ENCODE measurements at regions of chr6 and their contacts with region 1.

Region 1: DNA sequence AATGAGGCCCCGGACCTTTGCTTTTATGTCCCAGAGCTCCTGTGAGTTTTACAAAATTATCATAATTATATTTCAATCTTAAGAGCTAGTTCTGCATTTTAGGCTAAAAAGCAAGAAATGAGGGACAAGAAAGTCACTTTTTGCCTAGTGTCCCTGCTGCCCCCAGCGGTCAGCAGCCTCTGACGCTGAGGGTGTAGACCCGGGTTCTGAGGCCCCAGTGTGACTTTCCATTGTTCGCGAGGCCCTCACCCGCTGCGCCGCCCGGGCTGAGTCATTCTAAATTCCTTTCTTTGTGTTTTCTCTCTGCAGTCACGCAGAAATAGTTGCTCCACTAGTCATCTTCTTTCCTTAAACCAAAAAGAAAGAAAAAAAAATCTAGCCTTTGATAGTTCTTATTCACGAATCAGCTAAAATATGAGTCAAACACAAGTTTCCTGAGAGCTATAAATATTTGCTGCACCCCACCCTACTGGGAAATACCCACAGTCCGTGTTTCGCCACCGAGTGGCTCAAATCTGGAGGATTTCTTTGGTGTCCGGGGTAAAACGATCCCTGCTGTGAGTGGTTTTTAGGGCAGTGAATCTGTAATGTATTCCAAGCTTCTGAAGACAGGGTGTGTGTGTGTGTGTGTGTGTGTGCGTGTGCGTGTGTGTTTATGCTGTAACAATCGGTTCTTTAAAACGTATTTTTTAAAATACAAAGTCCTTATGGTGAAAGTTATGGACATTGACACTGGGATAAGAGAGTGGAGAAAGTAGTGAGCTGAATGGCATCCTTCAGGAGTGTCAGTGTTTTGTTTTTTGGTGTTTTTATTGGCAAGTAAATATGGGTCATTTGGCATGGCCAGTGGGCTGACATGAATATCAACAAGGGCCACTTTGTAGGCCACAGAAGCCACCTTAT is 59.7 kb upstream of the EEF1A1 start:
- DNase-seq: peak; percentile 92
- H3K4me3 Mint-ChIP-seq: peak overlapping the region; percentile 73
- H3K27ac Mint-ChIP-seq: peak overlapping the region; percentile 97
- H3K4me1 Mint-ChIP-seq: peaks cover 27% of the 10 kb centered on the region
- H3K27me3 Mint-ChIP-seq: peaks cover under 1% of the 10 kb centered on the region

Region 2: DNA sequence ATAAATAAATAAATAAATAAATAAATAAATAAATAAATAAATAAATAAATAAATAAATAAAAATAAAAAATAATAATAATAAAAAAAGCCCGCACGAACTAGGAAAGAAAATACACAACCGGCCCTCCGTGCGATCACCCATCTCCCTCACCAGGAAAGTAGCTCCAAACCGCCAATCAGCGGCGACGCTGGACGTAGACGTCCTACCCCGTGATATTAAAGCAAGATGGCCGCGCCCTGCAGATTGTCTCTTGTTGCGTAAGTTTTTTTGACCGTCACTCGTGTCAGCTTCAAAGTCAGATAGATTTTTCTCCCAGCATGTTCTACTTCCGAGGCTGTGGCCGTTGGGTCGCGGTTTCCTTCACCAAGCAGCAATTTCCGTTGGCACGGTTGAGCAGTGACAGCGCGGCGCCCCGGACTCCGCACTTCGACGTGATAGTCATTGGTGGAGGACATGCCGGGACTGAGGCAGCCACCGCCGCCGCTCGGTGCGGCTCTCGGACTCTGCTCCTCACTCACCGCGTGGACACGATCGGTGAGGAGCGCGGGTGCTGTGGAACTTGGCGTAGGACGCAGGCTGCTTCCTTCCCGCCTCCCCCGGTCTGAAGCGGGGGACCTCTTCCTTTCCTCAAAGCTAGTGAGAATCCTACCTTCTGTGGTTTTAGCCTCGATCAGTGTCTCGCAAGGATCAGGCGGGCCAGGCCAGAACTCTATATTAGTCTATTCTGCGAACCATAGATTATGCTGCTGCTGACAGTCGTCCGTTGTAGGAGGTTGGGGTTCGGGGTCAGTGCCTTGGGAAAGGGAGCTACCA is 118.8 kb before region 1 on chr6 and contains the start of gene MTO1:
- CTCF ChIA-PET with region 1: no interaction called
- POLR2A ChIA-PET with region 1: interaction called, 6 read pairs
- intact Hi-C with region 1: loop called (anchors 2 kb)
- DNase-seq: peak; percentile 91
- H3K4me3 Mint-ChIP-seq: peak within 1 kb of the TSS; percentile 97
- H3K27ac Mint-ChIP-seq: peak within 1 kb of the TSS; percentile 97
- H3K4me1 Mint-ChIP-seq: peaks cover 40% of the 10 kb centered on the region
- H3K27me3 Mint-ChIP-seq: no peaks in the 10 kb centered on the region
- total RNA-seq, gene MTO1: 40.7 to 47.7 TPM

Region 3: GRCh38 chr6:73520688-73521350 is 59.7 kb before region 1 on chr6 and contains the start of gene EEF1A1:
- CTCF ChIA-PET with region 1: interaction called, 11 read pairs
- POLR2A ChIA-PET with region 1: interaction called, 67 read pairs
- intact Hi-C with region 1: loop called (anchors 1 kb)
- DNase-seq: peak; percentile 100
- H3K4me3 Mint-ChIP-seq: peak within 1 kb of the TSS; percentile 98
- H3K27ac Mint-ChIP-seq: peak within 1 kb of the TSS; percentile 100
- H3K4me1 Mint-ChIP-seq: peaks cover 39% of the 10 kb centered on the region
- H3K27me3 Mint-ChIP-seq: peaks cover 17% of the 10 kb centered on the region
- total RNA-seq, gene EEF1A1: 16,691 to 17,144 TPM

Region 4: DNA sequence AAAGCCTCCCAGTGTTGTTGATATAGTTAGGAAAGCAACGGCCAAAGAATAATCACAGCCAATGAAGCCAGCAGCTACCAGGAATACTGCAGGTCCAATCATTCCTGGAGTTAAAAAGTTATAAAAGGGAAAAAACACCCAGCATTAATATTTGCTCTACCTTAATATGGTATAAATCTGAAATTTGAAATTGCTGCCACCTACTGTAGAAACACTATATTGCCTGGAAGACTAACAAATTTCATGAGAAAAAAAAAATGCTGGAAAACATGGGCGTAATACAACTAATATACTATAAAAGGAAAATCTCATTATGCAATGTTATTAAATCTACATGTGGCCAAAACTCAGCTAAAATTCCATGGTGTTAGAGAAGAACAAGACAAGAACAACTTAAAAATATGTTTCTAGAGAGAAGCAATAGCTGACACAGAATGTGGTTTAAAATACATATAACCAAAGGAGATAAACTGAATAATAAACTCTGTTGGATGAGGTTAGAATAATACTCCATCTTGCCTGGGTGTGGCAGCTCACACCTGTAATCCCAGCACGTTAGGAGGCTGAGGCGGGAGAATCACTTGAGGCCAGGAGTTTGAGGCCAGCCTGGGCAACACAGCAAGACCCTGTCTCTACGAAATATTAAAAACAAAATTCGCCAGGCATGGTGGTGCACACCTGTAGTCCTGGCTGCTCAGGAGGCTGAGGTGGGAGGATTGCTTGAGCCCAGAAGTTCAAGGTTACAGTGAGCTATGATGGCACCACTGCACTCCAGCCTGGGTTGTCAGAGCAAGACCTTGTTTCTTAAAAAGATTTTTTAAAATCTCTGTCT is 30.2 kb after region 1 on chr6:
- CTCF ChIA-PET with region 1: interaction called, 8 read pairs
- POLR2A ChIA-PET with region 1: no interaction called
- intact Hi-C with region 1: loop called (anchors 2 kb)
- DNase-seq: no peak
- H3K4me3 Mint-ChIP-seq: no peak overlapping the region
- H3K27ac Mint-ChIP-seq: no peak overlapping the region
- H3K4me1 Mint-ChIP-seq: no peaks in the 10 kb centered on the region
- H3K27me3 Mint-ChIP-seq: no peaks in the 10 kb centered on the region

Region 5: GRCh38 chr6:73695619-73696421 is 115.3 kb after region 1 on chr6 and contains the start of gene CD109:
- CTCF ChIA-PET with region 1: interaction called, 3 read pairs
- POLR2A ChIA-PET with region 1: no interaction called
- intact Hi-C with region 1: loop called (anchors 1 kb)
- DNase-seq: peak; percentile 87
- H3K4me3 Mint-ChIP-seq: peak within 1 kb of the TSS; percentile 80
- H3K27ac Mint-ChIP-seq: peak within 1 kb of the TSS; percentile 90
- H3K4me1 Mint-ChIP-seq: peaks cover 36% of the 10 kb centered on the region
- H3K27me3 Mint-ChIP-seq: peaks cover 16% of the 10 kb centered on the region
- total RNA-seq, gene CD109: 7.2 to 9.1 TPM